Naive thymus-derived CD8-positive, alpha-beta T cell (primary cell): ENCODE measurements at regions of chr6 and their contacts with region 1.

Region 1: GRCh38 chr6:47477497-47478232 is at the start of gene CD2AP:
- DNase-seq: peak; percentile 89 to 97 (median 94)
- ATAC-seq: peak; percentile 78 to 84
- H3K4me3 Mint-ChIP-seq: peak within 1 kb of the TSS; percentile 95 to 100 (median 99)
- H3K27ac Mint-ChIP-seq: peak within 1 kb of the TSS; percentile 95 to 100 (median 98)
- H3K4me1 Mint-ChIP-seq: peaks cover 18 to 52% (median 46%) of the 10 kb centered on the region in 4 donors
- H3K27me3 Mint-ChIP-seq: no peaks in the 10 kb centered on the region
- polyA plus RNA-seq, gene CD2AP: 7.3 to 7.9 (median 7.7) TPM

Region 2: DNA sequence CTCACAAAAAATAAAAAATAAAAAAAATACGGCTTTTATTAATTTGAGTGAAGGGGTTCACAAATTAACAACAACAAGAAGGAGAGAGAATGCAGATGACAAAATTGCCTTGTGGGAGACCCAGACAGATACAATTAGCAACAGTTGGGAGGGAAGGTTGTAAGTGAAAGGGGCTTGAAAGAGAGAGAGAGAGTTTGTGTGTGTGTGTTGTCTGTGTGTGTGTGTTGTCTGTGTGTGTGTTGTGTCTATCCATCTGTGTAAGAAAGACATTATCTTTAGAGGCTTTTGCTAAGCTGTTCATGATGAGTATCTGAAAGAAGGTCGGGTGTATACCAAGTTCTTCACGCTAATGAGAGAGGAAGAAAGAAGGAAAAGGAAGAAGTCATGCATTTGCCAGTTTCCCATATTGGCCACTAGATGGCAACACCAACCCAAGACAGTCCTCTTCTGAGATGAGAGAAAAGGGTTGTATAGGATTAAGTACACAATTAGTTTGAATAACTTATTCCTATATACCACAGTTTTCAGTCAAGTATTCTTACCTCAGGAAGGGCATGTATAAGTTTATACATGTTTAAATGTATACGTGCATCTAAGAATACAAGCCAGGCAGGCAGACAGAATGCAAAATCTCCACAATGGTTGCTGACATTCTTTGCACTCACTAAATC is 63.8 kb before region 1 on chr6:
- POLR2A ChIA-PET with region 1: interaction called, 26 read pairs
- DNase-seq: peak in 9 of 10 donors; percentile 9 to 72 (median 47)
- ATAC-seq: peak; percentile 81
- H3K4me3 Mint-ChIP-seq: peak overlapping the region; percentile 54 to 90 (median 86)
- H3K27ac Mint-ChIP-seq: peak overlapping the region; percentile 11 to 92 (median 91)
- H3K4me1 Mint-ChIP-seq: peaks cover 7 to 20% (median 19%) of the 10 kb centered on the region in 4 donors
- H3K27me3 Mint-ChIP-seq: no peaks in the 10 kb centered on the region